Endothelial cell of umbilical vein (primary cell): ENCODE measurements at regions of chr6 and their contacts with region 1.

Region 1: GRCh38 chr6:12637960-12638641 is 78.5 kb upstream of the PHACTR1 start:
- DNase-seq: peak; percentile 67
- H3K4me3 ChIP-seq: no peak overlapping the region
- H3K27ac ChIP-seq: no peak overlapping the region
- H3K4me1 ChIP-seq: no peaks in the 10 kb centered on the region
- H3K27me3 ChIP-seq: peaks cover 0 to 2% of the 10 kb centered on the region in 2 experiments
- CTCF ChIP-seq: peak; percentile 78 to 81
- POLR2A ChIP-seq: no peak

Region 2: DNA sequence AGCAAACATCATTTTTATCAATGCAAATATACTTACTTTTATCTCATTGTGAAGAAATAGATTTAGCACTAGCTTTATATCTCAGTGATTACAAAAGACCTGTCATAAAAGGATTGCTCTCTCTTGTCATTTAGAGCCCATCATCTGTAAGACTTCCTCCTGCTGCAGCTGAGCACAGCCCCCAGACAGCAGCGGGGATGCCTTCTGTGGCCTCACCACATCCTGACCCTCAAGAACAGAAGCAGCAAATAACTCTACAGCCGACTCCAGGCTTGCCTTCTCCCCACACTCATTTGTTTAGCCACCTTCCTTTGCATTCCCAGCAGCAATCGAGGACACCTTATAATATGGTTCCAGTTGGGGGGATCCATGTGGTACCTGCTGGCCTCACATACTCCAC is 475.0 kb before region 1 on chr6:
- CTCF ChIA-PET with region 1: no interaction called
- POLR2A ChIA-PET with region 1: no interaction called
- dilution Hi-C with region 1: no loop called
- intact Hi-C with region 1: no loop called
- DNase-seq: no peak
- H3K4me3 ChIP-seq: no peak overlapping the region
- H3K27ac ChIP-seq: no peak overlapping the region
- H3K4me1 ChIP-seq: no peaks in the 10 kb centered on the region
- H3K27me3 ChIP-seq: no peaks in the 10 kb centered on the region
- CTCF ChIP-seq: no peak
- POLR2A ChIP-seq: no peak

Region 3: GRCh38 chr6:12656906-12657305 is 18.8 kb after region 1 on chr6:
- CTCF ChIA-PET with region 1: no interaction called
- POLR2A ChIA-PET with region 1: no interaction called
- dilution Hi-C with region 1: no loop called
- intact Hi-C with region 1: no loop called
- DNase-seq: no peak
- H3K4me3 ChIP-seq: no peak overlapping the region
- H3K27ac ChIP-seq: no peak overlapping the region
- H3K4me1 ChIP-seq: no peaks in the 10 kb centered on the region
- H3K27me3 ChIP-seq: peaks cover 0 to 3% of the 10 kb centered on the region in 2 experiments
- CTCF ChIP-seq: no peak
- POLR2A ChIP-seq: no peak

Region 4: DNA sequence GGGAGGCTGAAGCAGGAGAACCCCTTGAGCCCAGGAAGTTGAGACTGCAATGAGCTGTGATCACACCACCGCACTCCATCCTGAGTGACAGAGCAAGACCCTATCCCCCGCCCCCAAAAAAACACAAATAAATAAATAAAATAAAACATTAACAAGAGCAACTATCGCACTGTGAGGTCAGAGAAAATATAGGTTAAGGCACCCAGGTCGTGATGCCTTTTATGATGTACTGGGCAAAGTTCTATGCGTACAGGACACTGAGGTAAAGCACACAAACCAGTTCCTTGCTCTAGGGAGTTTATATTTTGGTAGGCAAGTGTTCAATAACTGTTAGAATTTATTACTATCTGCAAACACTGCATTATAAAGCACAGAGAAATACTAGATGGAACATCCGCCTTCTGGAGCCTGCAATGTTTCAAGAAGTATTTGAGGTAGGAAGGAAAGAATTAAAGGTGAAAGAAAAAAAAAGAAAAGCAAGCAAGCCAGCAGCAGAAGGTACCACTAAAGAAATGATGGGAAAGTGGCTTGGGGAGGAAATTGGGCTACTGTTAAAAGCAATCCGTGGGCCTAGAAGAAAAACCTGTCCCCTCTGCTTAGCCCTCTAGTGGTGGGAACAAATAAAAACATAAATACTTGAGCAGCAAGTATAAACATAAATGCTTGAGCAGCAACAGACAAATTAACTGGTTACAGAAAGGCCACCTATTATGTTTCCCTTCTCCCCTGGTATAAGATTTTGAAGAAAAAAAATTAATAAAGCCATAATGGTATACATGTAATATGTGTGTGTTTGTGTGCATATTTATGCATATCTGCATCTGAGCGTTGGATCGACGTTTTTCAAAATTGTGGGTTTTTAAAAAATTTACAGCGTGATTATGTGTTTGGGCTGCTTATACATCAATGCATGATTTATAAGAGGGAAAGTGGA is 206.5 kb after region 1 on chr6:
- CTCF ChIA-PET with region 1: interaction called, 8 read pairs
- POLR2A ChIA-PET with region 1: no interaction called
- dilution Hi-C with region 1: no loop called
- intact Hi-C with region 1: loop called (anchors 1 kb)
- DNase-seq: peak; percentile 23
- H3K4me3 ChIP-seq: no peak overlapping the region
- H3K27ac ChIP-seq: no peak overlapping the region
- H3K4me1 ChIP-seq: no peaks in the 10 kb centered on the region
- H3K27me3 ChIP-seq: peaks cover 0 to 3% of the 10 kb centered on the region in 2 experiments
- CTCF ChIP-seq: peak; percentile 47 to 55
- POLR2A ChIP-seq: no peak

Region 5: GRCh38 chr6:12899046-12899833 is 261.1 kb after region 1 on chr6:
- CTCF ChIA-PET with region 1: interaction called, 84 read pairs
- POLR2A ChIA-PET with region 1: no interaction called
- dilution Hi-C with region 1: no loop called
- intact Hi-C with region 1: loop called (anchors 1 kb)
- DNase-seq: no peak
- H3K4me3 ChIP-seq: no peak overlapping the region
- H3K27ac ChIP-seq: no peak overlapping the region
- H3K4me1 ChIP-seq: no peaks in the 10 kb centered on the region
- H3K27me3 ChIP-seq: peaks cover 17 to 23% of the 10 kb centered on the region in 2 experiments
- CTCF ChIP-seq: no peak
- POLR2A ChIP-seq: no peak

Region 6: GRCh38 chr6:13302751-13303667 is 664.9 kb after region 1 on chr6:
- CTCF ChIA-PET with region 1: no interaction called
- POLR2A ChIA-PET with region 1: no interaction called
- dilution Hi-C with region 1: no loop called
- intact Hi-C with region 1: loop called (anchors 10 kb)
- DNase-seq: peak; percentile 93
- H3K4me3 ChIP-seq: peak overlapping the region in 1 of 3 experiments; percentile 15
- H3K27ac ChIP-seq: peak overlapping the region; percentile 86
- H3K4me1 ChIP-seq: peaks cover 36% of the 10 kb centered on the region
- H3K27me3 ChIP-seq: no peaks in the 10 kb centered on the region
- CTCF ChIP-seq: no peak
- POLR2A ChIP-seq: no peak